ENCODE measurements at regions of chr1 and their contacts with region 1.

Region 1: GRCh38 chr1:37682334-37682987 is 9.9 kb upstream of the CDCA8 start:
- DNase-seq: peak in 1 of 2 donors; percentile 46
- ATAC-seq: peak in 1 of 2 donors; percentile 72
- H3K4me3 ChIP-seq: no peak overlapping the region
- H3K27ac ChIP-seq: no peak overlapping the region
- H3K4me1 ChIP-seq: no peaks in the 10 kb centered on the region
- H3K27me3 ChIP-seq: no peaks in the 10 kb centered on the region
- CTCF ChIP-seq: peak; percentile 58 to 82 (median 72)
- POLR2A ChIP-seq: no peak

Region 2: GRCh38 chr1:37449936-37450335 is 232.5 kb before region 1 on chr1:
- in situ Hi-C with region 1: loop called (anchors 10 kb)
- intact Hi-C with region 1: loop called (anchors 1 kb)
- DNase-seq: no peak
- ATAC-seq: no peak
- H3K4me3 ChIP-seq: no peak overlapping the region
- H3K27ac ChIP-seq: no peak overlapping the region
- H3K4me1 ChIP-seq: peaks cover 0 to under 1% of the 10 kb centered on the region in 2 donors
- H3K27me3 ChIP-seq: peaks cover 34 to 35% (median 34%) of the 10 kb centered on the region in 3 donors
- CTCF ChIP-seq: no peak
- POLR2A ChIP-seq: no peak

Region 3: GRCh38 chr1:37602750-37603694 is 79.4 kb before region 1 on chr1:
- in situ Hi-C with region 1: loop called in 3 of 4 experiments (anchors 5 to 10 kb)
- intact Hi-C with region 1: no loop called
- DNase-seq: no peak
- ATAC-seq: no peak
- H3K4me3 ChIP-seq: no peak overlapping the region
- H3K27ac ChIP-seq: no peak overlapping the region
- H3K4me1 ChIP-seq: no peaks in the 10 kb centered on the region
- H3K27me3 ChIP-seq: peaks cover 0 to 5% (median 0%) of the 10 kb centered on the region in 3 donors
- CTCF ChIP-seq: peak in 2 of 5 experiments; percentile 33 to 51
- POLR2A ChIP-seq: no peak

Region 4: DNA sequence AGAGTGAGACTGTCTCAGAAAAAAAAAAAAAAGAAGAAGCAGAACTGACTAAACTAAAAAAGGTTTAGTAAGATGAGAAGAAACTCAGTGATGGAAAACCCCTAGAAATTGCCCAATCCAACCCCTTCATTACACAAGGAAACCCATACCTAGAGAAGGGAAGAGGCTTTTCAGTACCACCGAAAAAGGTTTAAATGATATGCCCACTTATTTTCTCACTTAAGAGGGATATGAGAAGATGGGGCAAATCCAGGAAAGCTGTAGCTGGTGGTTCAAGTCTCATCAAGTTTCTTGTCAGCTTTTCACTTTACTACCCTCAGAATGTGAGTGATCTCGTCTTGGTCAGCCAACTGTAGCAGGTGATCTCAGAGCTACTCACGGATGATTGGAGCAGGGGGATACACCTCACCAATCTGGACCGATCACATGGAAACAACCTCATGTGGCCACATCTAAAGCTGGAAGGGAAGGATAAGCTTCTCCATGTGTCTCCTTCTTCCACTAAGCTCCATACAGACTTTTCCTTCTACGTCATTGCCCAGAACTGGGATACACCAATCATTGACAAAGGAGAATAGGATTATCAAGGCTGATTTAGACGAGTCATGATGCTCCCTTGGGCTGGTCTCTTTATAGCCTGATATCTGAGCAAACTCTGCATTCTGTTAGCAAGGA is 490.8 kb after region 1 on chr1:
- in situ Hi-C with region 1: no loop called
- intact Hi-C with region 1: no loop called
- DNase-seq: no peak
- ATAC-seq: no peak
- H3K4me3 ChIP-seq: no peak overlapping the region
- H3K27ac ChIP-seq: no peak overlapping the region
- H3K4me1 ChIP-seq: no peaks in the 10 kb centered on the region
- H3K27me3 ChIP-seq: no peaks in the 10 kb centered on the region
- CTCF ChIP-seq: no peak
- POLR2A ChIP-seq: no peak

Measured in gastrocnemius medialis (tissue), 4 donors.